ENCODE measurements at regions of chr6 and their contacts with region 1.

Region 1: GRCh38 chr6:122839477-122839876 is 50.4 kb downstream of the SMPDL3A start:
- DNase-seq: peak in 1 of 2 experiments; percentile 87
- H3K4me3 ChIP-seq: no peak overlapping the region
- H3K27ac ChIP-seq: no peak overlapping the region
- H3K4me1 ChIP-seq: peaks cover 0 to 2% (median 0%) of the 10 kb centered on the region in 4 experiments; a peak in 1 of 7 replicates
- H3K27me3 ChIP-seq: no peaks in the 10 kb centered on the region
- CTCF ChIP-seq: peak in 2 of 3 experiments; percentile 71 to 72; a peak in 3 of 4 replicates
- EP300 ChIP-seq: no peak
- POLR2A ChIP-seq: no peak
- RAD21 ChIP-seq: peak; percentile 69 to 78

Region 2: DNA sequence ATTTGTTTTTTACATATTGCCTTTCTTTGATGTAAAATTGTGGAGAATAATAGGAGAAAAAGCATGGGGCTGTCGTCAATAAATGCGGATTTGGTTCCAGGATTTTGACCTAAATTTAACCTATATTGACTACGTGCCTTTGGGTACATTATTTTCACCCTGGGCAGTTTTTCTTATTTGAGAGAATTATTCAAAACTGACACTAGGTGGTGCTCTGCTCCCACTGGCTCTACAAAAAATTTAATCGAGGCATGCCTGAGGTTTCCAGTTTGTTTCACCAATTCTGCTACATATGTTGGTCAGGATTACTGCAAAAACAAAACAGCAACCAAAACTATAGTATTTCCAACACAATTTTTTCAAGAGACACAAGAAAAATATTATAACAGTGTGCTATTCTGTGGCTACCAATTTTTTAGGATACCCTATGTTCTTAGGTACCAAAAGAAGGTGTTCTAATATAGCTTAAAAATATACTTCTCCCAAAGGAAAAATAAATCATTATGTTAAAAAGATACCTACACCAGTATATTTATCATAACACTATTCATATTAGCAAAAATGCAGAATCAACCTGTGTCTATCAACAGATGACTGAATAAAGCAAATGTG is 108.6 kb before region 1 on chr6:
- CTCF ChIA-PET with region 1: interaction called, 179 read pairs
- POLR2A ChIA-PET with region 1: interaction called, 5 read pairs
- DNase-seq: no peak
- H3K4me3 ChIP-seq: no peak overlapping the region
- H3K27ac ChIP-seq: no peak overlapping the region
- H3K4me1 ChIP-seq: peaks cover 3 to 10% (median 7%) of the 10 kb centered on the region in 4 experiments; a peak in 5 of 7 replicates
- H3K27me3 ChIP-seq: no peaks in the 10 kb centered on the region
- CTCF ChIP-seq: peak in 2 of 3 experiments; percentile 54 to 76; a peak in 3 of 4 replicates
- EP300 ChIP-seq: no peak
- POLR2A ChIP-seq: no peak
- RAD21 ChIP-seq: peak; percentile 93

Region 3: GRCh38 chr6:122770835-122771601 is 68.5 kb before region 1 on chr6:
- CTCF ChIA-PET with region 1: interaction called, 12 read pairs
- POLR2A ChIA-PET with region 1: no interaction called
- DNase-seq: no peak
- H3K4me3 ChIP-seq: no peak overlapping the region
- H3K27ac ChIP-seq: no peak overlapping the region
- H3K4me1 ChIP-seq: no peaks in the 10 kb centered on the region
- H3K27me3 ChIP-seq: no peaks in the 10 kb centered on the region
- CTCF ChIP-seq: peak in 2 of 3 experiments; percentile 32 to 36; a peak in 3 of 4 replicates
- EP300 ChIP-seq: no peak
- POLR2A ChIP-seq: no peak
- RAD21 ChIP-seq: peak; percentile 44 to 52

Region 4: GRCh38 chr6:122789182-122790027 is 50.1 kb before region 1 on chr6 and contains the start of gene SMPDL3A:
- CTCF ChIA-PET with region 1: interaction called, 62 read pairs
- POLR2A ChIA-PET with region 1: interaction called, 3 read pairs
- DNase-seq: peak; percentile 44 to 90
- H3K4me3 ChIP-seq: peak within 1 kb of the TSS; percentile 72 to 86 (median 80)
- H3K27ac ChIP-seq: peak within 1 kb of the TSS; percentile 60; the same call in 1 of the 2 replicates
- H3K4me1 ChIP-seq: peaks cover 3 to 24% (median 13%) of the 10 kb centered on the region in 4 experiments; a peak in 6 of 7 replicates
- H3K27me3 ChIP-seq: no peaks in the 10 kb centered on the region; a peak in 2 of 7 replicates
- CTCF ChIP-seq: peak; percentile 34 to 38 (median 36)
- EP300 ChIP-seq: no peak
- POLR2A ChIP-seq: peak; percentile 33 to 51; a peak in 2 of 3 replicates
- RAD21 ChIP-seq: peak in 1 of 2 experiments; percentile 10; a peak in 1 of 4 replicates
- total RNA-seq, gene SMPDL3A: 2.6 and 3.5 TPM in 2 replicates

Region 5: GRCh38 chr6:122809001-122809400 is 30.5 kb before region 1 on chr6:
- CTCF ChIA-PET with region 1: interaction called, 21 read pairs
- POLR2A ChIA-PET with region 1: no interaction called
- DNase-seq: no peak
- H3K4me3 ChIP-seq: no peak overlapping the region
- H3K27ac ChIP-seq: no peak overlapping the region
- H3K4me1 ChIP-seq: no peaks in the 10 kb centered on the region
- H3K27me3 ChIP-seq: peaks cover 0 to 1% (median 0%) of the 10 kb centered on the region in 4 experiments; a peak in 1 of 7 replicates
- CTCF ChIP-seq: no peak
- EP300 ChIP-seq: no peak
- POLR2A ChIP-seq: no peak
- RAD21 ChIP-seq: no peak

Region 6: GRCh38 chr6:122853259-122853995 is 13.9 kb after region 1 on chr6:
- CTCF ChIA-PET with region 1: interaction called, 17 read pairs
- POLR2A ChIA-PET with region 1: no interaction called
- DNase-seq: no peak
- H3K4me3 ChIP-seq: no peak overlapping the region
- H3K27ac ChIP-seq: no peak overlapping the region
- H3K4me1 ChIP-seq: no peaks in the 10 kb centered on the region
- H3K27me3 ChIP-seq: no peaks in the 10 kb centered on the region
- CTCF ChIP-seq: no peak
- EP300 ChIP-seq: no peak
- POLR2A ChIP-seq: no peak
- RAD21 ChIP-seq: no peak

Region 7: DNA sequence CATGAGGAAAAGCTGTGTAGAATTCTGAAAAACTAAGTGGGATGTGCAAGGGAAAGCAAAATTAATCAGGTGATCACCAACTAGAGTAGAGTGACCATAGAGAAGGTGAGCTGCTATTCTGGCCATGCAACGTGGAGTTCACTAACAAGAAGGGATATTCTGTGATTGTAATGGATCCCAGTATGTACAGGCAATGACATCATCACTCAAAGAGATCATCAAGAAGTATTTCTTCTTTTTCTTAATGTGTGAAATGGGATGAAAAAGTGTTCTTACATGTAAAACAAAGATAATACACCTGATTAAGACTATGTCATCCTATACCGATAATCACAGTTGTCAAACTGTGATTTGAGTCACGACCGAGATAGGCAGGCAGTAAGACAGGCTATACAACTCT is 50.8 kb after region 1 on chr6:
- CTCF ChIA-PET with region 1: no interaction called
- POLR2A ChIA-PET with region 1: no interaction called
- DNase-seq: no peak
- H3K4me3 ChIP-seq: no peak overlapping the region
- H3K27ac ChIP-seq: no peak overlapping the region
- H3K4me1 ChIP-seq: no peaks in the 10 kb centered on the region; a peak in 1 of 7 replicates
- H3K27me3 ChIP-seq: no peaks in the 10 kb centered on the region
- CTCF ChIP-seq: no peak
- EP300 ChIP-seq: no peak
- POLR2A ChIP-seq: no peak
- RAD21 ChIP-seq: no peak

Measured in H1 (cell line).